GM12878 (cell line): ENCODE measurements at regions of chr4 and their contacts with region 1.

Region 1: GRCh38 chr4:10582059-10582686 is 102.4 kb downstream of the CLNK start:
- DNase-seq: no peak
- ATAC-seq: peak; percentile 62; the same call in 2 of the 3 replicates
- H3K4me3 ChIP-seq: no peak overlapping the region
- H3K27ac ChIP-seq: no peak overlapping the region
- H3K4me1 ChIP-seq: peaks cover 21% of the 10 kb centered on the region
- H3K27me3 ChIP-seq: no peaks in the 10 kb centered on the region
- CTCF ChIP-seq: peak; percentile 79 to 91 (median 83)
- EP300 ChIP-seq: no peak
- POLR2A ChIP-seq: no peak
- RAD21 ChIP-seq: peak; percentile 97

Region 2: DNA sequence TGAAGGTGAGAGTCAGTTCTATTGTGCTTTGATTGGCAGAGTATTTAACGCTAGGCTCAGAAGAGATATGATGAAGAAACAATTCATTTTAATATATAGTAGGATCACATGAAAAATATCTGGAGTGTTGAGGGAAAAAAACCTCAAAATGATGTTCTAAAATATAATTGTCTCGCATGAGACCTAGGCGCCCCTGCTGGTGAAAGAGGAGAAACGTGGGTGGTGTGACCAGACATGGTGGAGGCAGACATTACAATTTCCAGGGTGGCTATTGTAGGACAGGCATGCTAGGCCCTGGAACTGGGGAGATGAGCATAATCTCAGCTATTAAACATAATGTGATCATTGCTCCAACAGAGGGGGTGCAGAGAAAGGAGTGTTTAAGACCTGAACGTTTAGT is 636.5 kb after region 1 on chr4:
- CTCF ChIA-PET with region 1: no interaction called
- POLR2A ChIA-PET with region 1: no interaction called
- RAD21 ChIA-PET with region 1: no interaction called
- SMC1A ChIA-PET with region 1: no interaction called
- in situ Hi-C with region 1: no loop called
- intact Hi-C with region 1: loop called (anchors 5 kb)
- DNase-seq: no peak
- ATAC-seq: peak; percentile 67
- H3K4me3 ChIP-seq: no peak overlapping the region
- H3K27ac ChIP-seq: no peak overlapping the region
- H3K4me1 ChIP-seq: no peaks in the 10 kb centered on the region
- H3K27me3 ChIP-seq: no peaks in the 10 kb centered on the region
- CTCF ChIP-seq: peak in 2 of 3 experiments; percentile 40 to 50; a peak in 4 of 6 replicates
- EP300 ChIP-seq: no peak
- POLR2A ChIP-seq: no peak
- RAD21 ChIP-seq: peak; percentile 48

Region 3: DNA sequence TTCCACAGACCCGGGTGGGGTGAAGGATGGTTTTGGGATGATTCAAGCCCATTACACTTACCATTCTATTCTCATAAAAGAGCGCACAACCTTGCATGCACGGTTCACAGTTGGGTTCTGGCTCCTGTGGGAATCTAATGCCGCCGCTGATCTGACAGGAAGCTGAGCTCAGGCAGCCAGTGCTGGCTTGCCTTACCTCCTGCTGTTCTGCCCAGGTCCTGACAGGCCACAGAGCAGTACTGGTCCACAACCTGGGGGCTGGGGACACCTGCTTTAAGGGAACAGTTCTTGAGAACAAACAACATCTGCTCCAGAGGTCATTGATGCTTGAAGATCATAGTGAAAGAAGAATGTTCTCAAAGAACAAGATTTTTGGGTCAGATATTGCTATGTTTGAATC is 854.5 kb after region 1 on chr4:
- CTCF ChIA-PET with region 1: interaction called, 10 read pairs
- POLR2A ChIA-PET with region 1: no interaction called
- RAD21 ChIA-PET with region 1: no interaction called
- SMC1A ChIA-PET with region 1: no interaction called
- in situ Hi-C with region 1: no loop called
- intact Hi-C with region 1: no loop called
- DNase-seq: no peak
- ATAC-seq: no peak
- H3K4me3 ChIP-seq: no peak overlapping the region
- H3K27ac ChIP-seq: no peak overlapping the region
- H3K4me1 ChIP-seq: peaks cover 9% of the 10 kb centered on the region; the same call in 1 of the 2 replicates
- H3K27me3 ChIP-seq: no peaks in the 10 kb centered on the region
- CTCF ChIP-seq: no peak
- EP300 ChIP-seq: no peak
- POLR2A ChIP-seq: no peak
- RAD21 ChIP-seq: no peak

Region 4: DNA sequence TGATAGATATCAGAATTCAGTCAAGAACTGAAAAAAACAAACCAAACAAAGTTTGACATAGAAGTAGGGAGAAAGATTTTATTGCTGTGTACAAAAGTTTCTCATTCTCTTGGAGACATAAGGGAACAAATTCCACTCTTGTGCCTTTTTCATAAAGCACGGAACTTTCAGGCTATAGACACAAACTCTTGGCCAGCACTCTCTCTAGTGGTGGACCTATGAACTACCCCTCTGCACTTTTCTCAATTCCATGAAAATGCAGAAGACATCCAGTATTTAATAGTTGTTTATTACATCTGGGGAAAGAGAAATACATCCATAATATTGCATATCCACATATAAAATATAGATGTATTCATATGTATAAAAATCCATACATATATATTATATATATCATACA is 1138.1 kb after region 1 on chr4:
- CTCF ChIA-PET with region 1: interaction called, 3 read pairs
- POLR2A ChIA-PET with region 1: no interaction called
- RAD21 ChIA-PET with region 1: no interaction called
- SMC1A ChIA-PET with region 1: no interaction called
- in situ Hi-C with region 1: no loop called
- intact Hi-C with region 1: loop called (anchors 1 kb)
- DNase-seq: no peak
- ATAC-seq: peak; percentile 51; the same call in 2 of the 3 replicates
- H3K4me3 ChIP-seq: no peak overlapping the region
- H3K27ac ChIP-seq: no peak overlapping the region
- H3K4me1 ChIP-seq: no peaks in the 10 kb centered on the region
- H3K27me3 ChIP-seq: no peaks in the 10 kb centered on the region
- CTCF ChIP-seq: peak; percentile 36 to 51 (median 39); a peak in 5 of 6 replicates
- EP300 ChIP-seq: no peak
- POLR2A ChIP-seq: no peak
- RAD21 ChIP-seq: peak; percentile 67